MCF 10A (cell line): ENCODE measurements at regions of chr3 and their contacts with region 1.

Region 1: DNA sequence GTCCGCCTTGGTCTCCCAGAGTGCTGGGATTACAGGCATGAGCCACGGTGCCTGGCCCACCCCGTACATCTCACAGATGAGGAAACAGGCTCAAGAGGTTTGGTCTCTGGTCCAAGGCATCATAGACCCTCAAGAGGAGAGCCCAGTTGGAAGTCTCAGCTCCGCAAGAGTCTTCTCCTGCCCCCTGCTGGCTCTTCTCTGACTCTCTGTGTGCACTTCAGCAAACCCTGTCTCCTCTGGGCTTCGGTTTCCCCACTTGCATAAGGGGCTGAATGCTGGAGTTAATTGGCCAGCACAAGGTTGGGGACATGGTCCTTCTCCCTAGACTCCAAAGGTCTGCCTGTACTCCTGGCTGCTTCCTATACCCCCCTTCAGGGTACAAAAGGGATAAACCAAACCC is 3.9 kb downstream of the MST1R start:
- DNase-seq: peak; percentile 54
- H3K4me3 Mint-ChIP-seq: peak overlapping the region; percentile 71
- H3K27ac Mint-ChIP-seq: peak overlapping the region; percentile 94
- H3K4me1 Mint-ChIP-seq: peaks cover 15% of the 10 kb centered on the region
- H3K27me3 Mint-ChIP-seq: no peaks in the 10 kb centered on the region
- CTCF ChIP-seq: peak; percentile 24

Region 2: DNA sequence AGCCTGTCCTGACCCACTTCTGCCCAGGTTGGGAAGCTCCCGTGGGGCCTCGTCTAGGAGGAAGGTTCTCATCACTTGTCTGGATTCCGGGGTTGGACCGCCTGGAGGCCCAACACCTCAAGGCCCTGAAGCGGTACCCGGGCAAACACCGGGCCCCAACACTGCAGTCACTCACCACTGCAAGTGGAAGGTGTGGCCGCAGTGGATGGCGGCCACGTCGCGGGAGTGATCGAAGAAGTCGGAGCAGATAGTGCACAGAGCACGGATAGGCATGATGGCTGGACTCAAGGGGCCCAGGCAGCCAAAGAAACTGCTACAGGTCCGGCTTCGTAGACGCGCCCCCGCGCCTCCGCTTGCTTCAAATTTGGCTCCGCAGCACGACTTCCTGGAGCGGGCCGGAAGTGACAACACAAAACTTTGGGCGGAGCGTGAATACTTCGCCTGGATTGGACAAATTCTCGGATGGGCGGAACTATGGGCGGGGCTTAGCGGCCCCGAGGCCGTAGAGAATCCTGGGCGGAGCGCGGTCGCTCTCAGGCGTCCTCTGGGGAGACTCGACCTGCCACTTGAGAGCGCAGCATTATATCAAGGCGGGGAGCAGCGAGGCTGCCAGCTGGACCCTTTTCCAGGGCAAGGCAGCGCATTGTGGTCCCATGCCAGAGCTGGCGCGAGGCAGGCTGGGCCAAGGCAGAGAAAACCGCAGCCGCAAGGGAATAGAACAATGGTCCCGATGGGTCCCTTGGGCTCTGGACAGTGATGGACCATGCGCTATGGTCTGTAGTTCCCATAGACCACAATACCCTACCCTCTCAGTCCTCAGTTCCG is 43.4 kb before region 1 on chr3 and contains the start of gene TRAIP:
- CTCF ChIA-PET with region 1: interaction called, 8 read pairs
- POLR2A ChIA-PET with region 1: interaction called, 8 read pairs
- intact Hi-C with region 1: loop called (anchors 2 kb)
- DNase-seq: peak; percentile 96
- H3K4me3 Mint-ChIP-seq: peak within 1 kb of the TSS; percentile 86
- H3K27ac Mint-ChIP-seq: peak within 1 kb of the TSS; percentile 74
- H3K4me1 Mint-ChIP-seq: peaks cover 8% of the 10 kb centered on the region
- H3K27me3 Mint-ChIP-seq: no peaks in the 10 kb centered on the region
- CTCF ChIP-seq: no peak
- total RNA-seq, gene TRAIP: 7.1 and 9.3 TPM in 2 replicates

Region 3: GRCh38 chr3:49916686-49917085 is 16.9 kb after region 1 on chr3:
- CTCF ChIA-PET with region 1: interaction called, 35 read pairs
- POLR2A ChIA-PET with region 1: interaction called, 20 read pairs
- intact Hi-C with region 1: no loop called
- DNase-seq: no peak
- H3K4me3 Mint-ChIP-seq: no peak overlapping the region
- H3K27ac Mint-ChIP-seq: no peak overlapping the region
- H3K4me1 Mint-ChIP-seq: no peaks in the 10 kb centered on the region
- H3K27me3 Mint-ChIP-seq: no peaks in the 10 kb centered on the region
- CTCF ChIP-seq: no peak